ENCODE measurements at regions of chr3 and their contacts with region 1.

Region 1: DNA sequence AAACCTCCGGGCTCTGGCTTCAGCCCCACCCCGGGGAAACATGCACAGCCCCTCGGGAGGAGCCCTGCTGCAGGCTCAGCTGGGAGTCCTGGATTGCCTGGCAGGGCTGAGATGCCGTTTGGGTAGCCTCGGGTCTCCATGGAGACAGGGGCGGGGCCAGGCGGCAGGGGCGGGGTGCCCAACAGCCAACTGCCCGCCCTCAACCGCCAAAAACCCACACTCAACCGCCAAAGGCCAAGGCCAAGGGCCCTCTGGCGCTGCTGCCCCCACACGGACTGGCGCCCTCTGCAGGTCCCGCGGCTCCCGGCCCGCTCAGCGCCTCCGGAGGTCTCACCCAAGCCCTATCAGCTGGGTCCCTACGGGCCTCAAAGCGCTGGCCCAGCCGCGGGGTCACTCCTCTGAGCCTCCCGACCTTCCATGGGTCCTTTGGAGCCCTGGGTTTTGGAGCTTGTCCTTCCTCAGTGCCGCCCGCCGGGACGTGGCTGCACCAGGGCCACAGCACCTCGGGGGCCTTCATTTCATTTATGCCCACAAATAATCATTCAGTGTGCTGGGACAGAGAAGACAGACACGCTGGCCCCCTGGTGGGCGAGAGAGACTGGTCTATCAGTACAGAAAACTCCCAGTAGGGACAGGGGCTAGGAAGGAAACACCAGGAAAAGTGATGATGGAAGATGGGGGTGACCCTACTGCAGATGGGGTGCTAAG is 33.5 kb upstream of the ACAD9 start:
- DNase-seq: peak; percentile 91
- ATAC-seq: peak; percentile 93 to 95

Region 2: GRCh38 chr3:128617557-128618397 is 228.2 kb before region 1 on chr3:
- intact Hi-C with region 1: loop called (anchors 5 to 10 kb)
- DNase-seq: peak; percentile 98
- ATAC-seq: peak; percentile 95 to 98

Region 3: GRCh38 chr3:128950223-128950938 is 104.4 kb after region 1 on chr3:
- intact Hi-C with region 1: no loop called
- DNase-seq: no peak
- ATAC-seq: peak in 1 of 2 donors; percentile 81

Region 4: DNA sequence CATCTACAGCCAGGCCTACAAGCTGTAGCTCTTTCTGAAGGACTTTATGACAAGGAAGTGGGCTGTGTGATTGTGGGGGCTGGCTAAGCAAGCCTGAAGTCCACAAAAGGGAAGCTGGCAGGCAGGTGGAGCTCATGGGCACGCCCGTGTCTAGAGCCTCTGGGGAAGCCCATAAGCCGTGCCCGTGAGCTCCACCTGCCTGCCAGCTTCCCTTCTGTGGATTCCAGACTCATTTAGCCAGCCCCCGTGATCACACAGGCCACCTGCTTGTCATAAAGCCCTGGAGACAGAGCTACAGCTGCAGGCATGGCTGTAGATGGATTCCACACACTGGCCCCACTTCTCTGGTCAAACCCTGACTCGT is 170.4 kb after region 1 on chr3:
- intact Hi-C with region 1: no loop called
- DNase-seq: no peak
- ATAC-seq: peak in 1 of 2 donors; percentile 57